HepG2 (cell line): ENCODE measurements at regions of chr13 and their contacts with region 1.

Region 1: DNA sequence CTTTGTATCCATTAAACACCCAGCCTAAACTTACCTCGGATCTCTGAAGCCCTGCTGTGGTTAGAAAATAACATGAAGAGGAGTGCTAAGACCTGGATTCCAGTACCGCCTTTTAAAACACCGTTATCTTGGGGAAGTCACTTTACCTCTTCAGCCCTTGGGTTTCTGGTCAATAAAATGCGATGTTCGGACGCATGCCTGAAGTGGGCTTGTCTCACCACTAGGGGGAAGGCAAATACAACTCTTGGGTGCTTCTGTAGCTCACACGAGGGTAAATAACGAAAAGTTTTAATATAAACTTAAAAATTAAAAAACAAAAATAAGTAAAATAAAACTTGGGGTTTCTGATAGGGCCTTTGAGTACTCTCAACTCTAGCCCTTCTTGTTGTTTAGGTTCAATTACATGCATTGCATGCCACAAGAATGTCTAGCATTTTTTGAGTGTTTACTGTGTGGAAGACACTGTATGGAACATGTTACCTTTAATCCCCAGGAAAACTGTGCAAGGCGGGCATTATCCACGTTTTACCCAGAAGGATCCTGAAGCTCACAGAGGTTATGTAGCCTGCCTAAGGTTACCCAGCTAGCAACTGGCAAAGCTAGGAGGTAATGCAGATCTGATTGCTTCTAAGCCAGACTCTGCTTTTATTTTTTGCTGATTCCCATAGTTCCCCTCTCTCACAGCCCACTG is 240.4 kb downstream of the LMO7 start:
- DNase-seq: peak; percentile 46
- ATAC-seq: peak; percentile 97
- H3K4me3 ChIP-seq: no peak overlapping the region
- H3K27ac ChIP-seq: no peak overlapping the region
- H3K4me1 ChIP-seq: no peaks in the 10 kb centered on the region
- H3K27me3 ChIP-seq: peaks cover 0 to 10% of the 10 kb centered on the region in 2 experiments; a peak in 2 of 5 replicates
- CTCF ChIP-seq: peak; percentile 78
- EP300 ChIP-seq: no peak
- POLR2A ChIP-seq: no peak
- RAD21 ChIP-seq: peak; percentile 46

Region 2: DNA sequence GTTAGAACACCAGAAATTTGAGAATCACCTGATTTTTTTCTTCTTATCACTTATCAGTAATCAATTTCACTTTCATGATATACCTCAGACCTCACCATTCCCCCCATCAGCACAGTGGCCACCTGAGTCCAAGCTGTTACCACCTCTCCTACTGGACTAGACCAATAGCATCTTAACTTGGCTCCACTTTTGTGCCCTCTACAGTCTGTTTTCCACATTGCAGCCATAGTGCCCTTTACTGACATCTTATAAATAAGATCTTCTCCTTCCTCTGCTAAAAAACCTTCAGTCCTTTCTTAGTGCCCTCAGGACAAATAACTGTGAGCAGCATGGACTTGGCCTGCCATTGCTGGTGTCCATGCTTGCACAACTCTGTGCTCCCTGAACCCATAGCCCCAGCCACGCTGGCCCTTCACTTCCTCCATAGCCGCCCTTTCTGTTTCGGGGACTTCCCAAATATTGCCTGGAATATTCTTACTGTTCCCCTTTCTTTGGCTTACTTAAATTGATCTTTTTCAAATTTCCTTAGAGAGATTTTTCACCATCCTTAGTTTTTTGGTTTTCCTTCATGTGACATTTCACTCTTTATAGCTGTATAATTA is 140.4 kb after region 1 on chr13:
- CTCF ChIA-PET with region 1: no interaction called
- POLR2A ChIA-PET with region 1: no interaction called
- in situ Hi-C with region 1: loop called (anchors 5 kb)
- intact Hi-C with region 1: loop called (anchors 2 kb)
- DNase-seq: peak; percentile 25
- ATAC-seq: peak; percentile 53
- H3K4me3 ChIP-seq: no peak overlapping the region
- H3K27ac ChIP-seq: no peak overlapping the region
- H3K4me1 ChIP-seq: 0 out of 2 replicates have a peak, but pooled peaks cover 6% of the 10 kb centered on the region
- H3K27me3 ChIP-seq: no peaks in the 10 kb centered on the region
- CTCF ChIP-seq: 0 out of 2 replicates have a peak, but pooled peaks have one; percentile 27
- EP300 ChIP-seq: no peak
- POLR2A ChIP-seq: no peak
- RAD21 ChIP-seq: no peak